H1 (cell line): ENCODE measurements at regions of chr18 and their contacts with region 1.

Region 1: DNA sequence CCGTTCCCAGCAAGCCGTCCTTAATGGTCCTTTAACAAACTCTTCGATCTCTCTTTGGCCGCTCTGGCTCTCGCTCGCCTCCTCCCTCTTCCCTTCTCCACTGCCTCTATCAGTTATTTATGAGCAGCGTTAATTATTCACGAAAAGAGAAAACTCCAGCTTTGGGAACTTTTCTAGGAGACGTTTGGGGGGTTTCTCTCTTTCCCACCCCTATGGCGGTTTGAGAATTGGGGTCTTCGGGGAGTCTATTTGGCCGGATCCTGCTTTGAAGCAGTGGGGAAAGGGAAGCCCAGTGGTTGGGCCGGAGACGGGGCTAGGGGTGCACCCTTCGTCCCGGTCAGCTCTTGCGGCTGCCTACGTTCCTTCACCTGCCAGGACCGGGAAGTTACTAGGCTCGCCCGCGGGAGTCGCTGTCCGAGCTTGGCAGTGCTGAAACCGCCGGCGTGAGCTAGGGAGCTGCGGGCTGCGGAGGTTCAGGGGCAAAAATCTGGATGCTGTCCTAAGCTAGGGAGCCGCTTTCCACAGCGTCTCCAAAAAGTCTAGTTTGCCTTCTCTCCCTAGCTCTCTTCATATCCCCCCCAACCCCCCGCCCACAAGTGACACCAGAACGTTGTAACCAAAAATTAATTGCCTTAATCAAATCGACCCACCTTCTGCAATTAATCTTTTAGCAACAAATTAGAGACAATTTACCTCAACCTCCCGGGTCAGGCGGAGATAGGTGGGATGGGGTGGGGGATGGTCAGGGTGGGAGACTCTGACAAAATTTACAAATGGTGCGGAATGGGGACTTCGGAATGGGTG is 8.9 kb upstream of the SKOR2 start:
- DNase-seq: peak in 1 of 2 experiments; percentile 95
- H3K4me3 ChIP-seq: peak overlapping the region in 1 of 4 experiments; percentile 84; a peak in 2 of 8 replicates
- H3K27ac ChIP-seq: no peak overlapping the region
- H3K4me1 ChIP-seq: peaks cover 8 to 28% (median 16%) of the 10 kb centered on the region in 4 experiments
- H3K27me3 ChIP-seq: peaks cover 71 to 100% (median 84%) of the 10 kb centered on the region in 4 experiments
- CTCF ChIP-seq: no peak
- EP300 ChIP-seq: no peak
- POLR2A ChIP-seq: no peak
- RAD21 ChIP-seq: peak; percentile 10 to 14; a peak in 2 of 4 replicates

Region 2: GRCh38 chr18:47226660-47227059 is 33.7 kb before region 1 on chr18:
- CTCF ChIA-PET with region 1: interaction called, 14 read pairs
- POLR2A ChIA-PET with region 1: interaction called, 3 read pairs
- DNase-seq: no peak
- H3K4me3 ChIP-seq: no peak overlapping the region
- H3K27ac ChIP-seq: no peak overlapping the region
- H3K4me1 ChIP-seq: peaks cover 0 to 3% (median 0%) of the 10 kb centered on the region in 4 experiments; a peak in 2 of 7 replicates
- H3K27me3 ChIP-seq: no peaks in the 10 kb centered on the region; a peak in 1 of 7 replicates
- CTCF ChIP-seq: no peak
- EP300 ChIP-seq: no peak
- POLR2A ChIP-seq: no peak
- RAD21 ChIP-seq: no peak

Region 3: GRCh38 chr18:47235096-47235495 is 25.2 kb before region 1 on chr18:
- CTCF ChIA-PET with region 1: interaction called, 19 read pairs
- POLR2A ChIA-PET with region 1: interaction called, 3 read pairs
- DNase-seq: no peak
- H3K4me3 ChIP-seq: no peak overlapping the region
- H3K27ac ChIP-seq: no peak overlapping the region
- H3K4me1 ChIP-seq: peaks cover 0 to 2% (median 0%) of the 10 kb centered on the region in 4 experiments; a peak in 2 of 7 replicates
- H3K27me3 ChIP-seq: no peaks in the 10 kb centered on the region
- CTCF ChIP-seq: no peak
- EP300 ChIP-seq: no peak
- POLR2A ChIP-seq: no peak
- RAD21 ChIP-seq: no peak

Region 4: GRCh38 chr18:47274961-47275360 is 14.6 kb after region 1 on chr18:
- CTCF ChIA-PET with region 1: interaction called, 27 read pairs
- POLR2A ChIA-PET with region 1: no interaction called
- DNase-seq: no peak
- H3K4me3 ChIP-seq: no peak overlapping the region
- H3K27ac ChIP-seq: no peak overlapping the region
- H3K4me1 ChIP-seq: peaks cover 0 to 2% (median 0%) of the 10 kb centered on the region in 4 experiments; a peak in 1 of 7 replicates
- H3K27me3 ChIP-seq: no peaks in the 10 kb centered on the region
- CTCF ChIP-seq: no peak
- EP300 ChIP-seq: no peak
- POLR2A ChIP-seq: no peak
- RAD21 ChIP-seq: no peak

Region 5: DNA sequence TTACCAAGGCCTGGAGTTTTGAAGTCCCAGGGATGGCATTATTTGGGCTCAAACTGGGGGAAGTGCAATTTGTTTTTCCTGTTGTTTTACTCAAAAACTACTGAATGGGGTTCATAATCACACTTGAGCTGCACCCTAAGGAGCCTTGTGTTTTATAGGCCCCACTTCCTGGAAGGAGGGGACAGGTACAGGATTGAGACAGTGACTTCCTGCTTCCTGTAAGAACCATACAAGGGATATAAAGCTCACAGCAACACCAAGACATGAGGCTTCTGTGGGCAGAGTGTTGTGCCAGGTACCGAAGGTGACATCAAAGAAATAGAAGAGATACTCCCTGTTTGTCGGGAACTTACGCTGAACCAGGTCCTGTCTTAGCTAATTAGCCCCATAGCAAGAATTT is 61.5 kb after region 1 on chr18:
- CTCF ChIA-PET with region 1: no interaction called
- POLR2A ChIA-PET with region 1: no interaction called
- DNase-seq: no peak
- H3K4me3 ChIP-seq: no peak overlapping the region
- H3K27ac ChIP-seq: no peak overlapping the region
- H3K4me1 ChIP-seq: no peaks in the 10 kb centered on the region
- H3K27me3 ChIP-seq: no peaks in the 10 kb centered on the region; a peak in 3 of 7 replicates
- CTCF ChIP-seq: no peak
- EP300 ChIP-seq: no peak
- POLR2A ChIP-seq: no peak
- RAD21 ChIP-seq: no peak